Calu3 (cell line): ENCODE measurements at regions of chr18 and their contacts with region 1.

Region 1: DNA sequence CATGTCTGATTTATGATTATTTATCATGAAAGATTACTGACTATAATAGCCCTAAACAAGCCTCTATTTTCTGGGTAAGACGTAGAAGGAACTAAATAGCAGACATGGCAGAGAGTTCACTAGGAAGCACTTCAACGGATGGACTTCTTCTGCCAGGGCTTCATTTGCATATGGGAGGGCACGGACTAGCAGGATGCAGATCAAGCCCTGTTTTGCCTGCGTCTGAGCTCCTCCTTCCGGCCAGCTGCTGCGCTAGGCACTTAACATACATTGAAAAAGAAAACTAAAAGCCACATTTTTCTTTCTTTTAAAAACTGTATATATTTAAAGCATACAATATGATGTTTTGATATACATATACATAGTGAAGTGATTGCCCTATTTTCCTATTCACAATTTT is 340.0 kb upstream of the MEX3C start:
- DNase-seq: peak; percentile 68
- H3K4me3 Mint-ChIP-seq: no peak overlapping the region
- H3K27ac Mint-ChIP-seq: no peak overlapping the region
- H3K4me1 Mint-ChIP-seq: no peaks in the 10 kb centered on the region
- H3K27me3 Mint-ChIP-seq: no peaks in the 10 kb centered on the region
- CTCF ChIP-seq: peak; percentile 33

Region 2: DNA sequence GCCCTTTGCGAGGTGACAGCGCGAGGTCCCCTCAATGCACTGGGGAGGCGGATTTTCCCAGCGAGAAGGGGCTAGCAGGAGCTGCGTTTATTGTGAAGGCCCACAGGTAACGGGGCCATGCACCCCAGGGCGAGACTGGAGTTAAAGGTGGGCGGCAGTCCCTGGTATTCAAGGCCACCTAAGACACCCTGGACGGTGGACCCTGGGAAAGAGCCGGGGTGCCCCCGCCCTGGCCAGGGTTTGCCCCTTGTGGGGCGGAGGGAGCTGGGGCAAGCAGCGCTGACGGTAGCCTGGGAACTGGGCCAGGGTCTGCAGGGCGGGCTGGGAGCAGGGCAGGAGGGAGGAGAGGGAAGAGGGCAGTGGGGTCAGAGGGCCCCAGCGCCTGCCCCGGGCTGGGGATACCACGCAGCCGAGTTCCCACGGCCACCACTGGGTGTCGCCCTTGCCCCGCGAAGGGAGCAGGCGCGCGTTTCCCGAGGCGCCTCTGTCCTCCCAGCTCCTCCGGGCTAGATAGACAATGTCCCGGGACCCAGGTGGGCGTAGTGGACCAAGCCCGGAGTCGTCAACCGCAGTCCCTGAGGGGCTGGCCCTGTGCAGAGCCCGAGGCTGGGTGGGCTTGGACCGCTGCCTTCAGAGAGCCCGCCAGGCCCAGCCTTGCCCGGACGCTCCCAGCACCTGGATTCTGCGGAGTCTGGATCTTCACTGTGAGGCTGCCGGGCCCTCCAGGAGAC is 427.2 kb before region 1 on chr18:
- CTCF ChIA-PET with region 1: no interaction called
- intact Hi-C with region 1: loop called (anchors 1 kb)
- DNase-seq: peak; percentile 85
- H3K4me3 Mint-ChIP-seq: no peak overlapping the region
- H3K27ac Mint-ChIP-seq: no peak overlapping the region
- H3K4me1 Mint-ChIP-seq: peaks cover 16% of the 10 kb centered on the region
- H3K27me3 Mint-ChIP-seq: no peaks in the 10 kb centered on the region
- CTCF ChIP-seq: peak; percentile 98

Region 3: GRCh38 chr18:51197661-51198424 is 339.6 kb before region 1 on chr18 and contains the start of gene MEX3C:
- CTCF ChIA-PET with region 1: no interaction called
- intact Hi-C with region 1: loop called (anchors 5 kb)
- DNase-seq: peak; percentile 99
- H3K4me3 Mint-ChIP-seq: peak within 1 kb of the TSS; percentile 80
- H3K27ac Mint-ChIP-seq: peak within 1 kb of the TSS; percentile 100
- H3K4me1 Mint-ChIP-seq: peaks cover 9% of the 10 kb centered on the region
- H3K27me3 Mint-ChIP-seq: no peaks in the 10 kb centered on the region
- CTCF ChIP-seq: peak; percentile 25
- total RNA-seq, gene MEX3C: 71.5 and 86.9 TPM in 2 replicates

Region 4: GRCh38 chr18:51278045-51278649 is 259.3 kb before region 1 on chr18:
- CTCF ChIA-PET with region 1: no interaction called
- intact Hi-C with region 1: loop called (anchors 1 kb)
- DNase-seq: peak; percentile 66
- H3K4me3 Mint-ChIP-seq: no peak overlapping the region
- H3K27ac Mint-ChIP-seq: no peak overlapping the region
- H3K4me1 Mint-ChIP-seq: peaks cover 16% of the 10 kb centered on the region
- H3K27me3 Mint-ChIP-seq: no peaks in the 10 kb centered on the region
- CTCF ChIP-seq: peak; percentile 77

Region 5: DNA sequence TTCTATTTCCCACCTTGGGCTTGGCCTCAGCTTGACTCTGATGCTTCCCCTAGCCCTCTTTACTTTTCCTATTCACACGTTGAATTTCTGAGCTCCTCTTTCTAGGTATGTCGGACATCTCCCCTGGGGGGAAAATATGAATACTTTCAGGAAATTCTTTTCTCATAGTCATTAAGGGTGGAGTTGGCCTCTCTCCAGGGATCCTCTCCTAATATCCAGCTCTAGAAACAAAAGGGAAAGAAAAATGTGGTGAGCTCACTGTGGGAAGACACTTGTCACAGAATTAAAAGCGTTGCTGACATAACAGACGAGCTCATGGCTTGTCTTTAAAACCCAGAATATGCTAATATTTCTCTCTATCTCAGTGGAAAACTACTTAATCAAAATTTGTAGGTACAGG is 207.3 kb before region 1 on chr18:
- CTCF ChIA-PET with region 1: no interaction called
- intact Hi-C with region 1: no loop called
- DNase-seq: no peak
- H3K4me3 Mint-ChIP-seq: no peak overlapping the region
- H3K27ac Mint-ChIP-seq: no peak overlapping the region
- H3K4me1 Mint-ChIP-seq: no peaks in the 10 kb centered on the region
- H3K27me3 Mint-ChIP-seq: peaks cover 11% of the 10 kb centered on the region
- CTCF ChIP-seq: no peak

Region 6: GRCh38 chr18:51430538-51430937 is 106.9 kb before region 1 on chr18:
- CTCF ChIA-PET with region 1: no interaction called
- intact Hi-C with region 1: loop called (anchors 5 kb)
- DNase-seq: no peak
- H3K4me3 Mint-ChIP-seq: no peak overlapping the region
- H3K27ac Mint-ChIP-seq: no peak overlapping the region
- H3K4me1 Mint-ChIP-seq: peaks cover 44% of the 10 kb centered on the region
- H3K27me3 Mint-ChIP-seq: no peaks in the 10 kb centered on the region
- CTCF ChIP-seq: no peak

Region 7: GRCh38 chr18:51480407-51481261 is 56.9 kb before region 1 on chr18:
- CTCF ChIA-PET with region 1: no interaction called
- intact Hi-C with region 1: no loop called
- DNase-seq: no peak
- H3K4me3 Mint-ChIP-seq: no peak overlapping the region
- H3K27ac Mint-ChIP-seq: no peak overlapping the region
- H3K4me1 Mint-ChIP-seq: no peaks in the 10 kb centered on the region
- H3K27me3 Mint-ChIP-seq: peaks cover 21% of the 10 kb centered on the region
- CTCF ChIP-seq: no peak

Region 8: GRCh38 chr18:51621113-51621863 is 83.8 kb after region 1 on chr18:
- CTCF ChIA-PET with region 1: no interaction called
- intact Hi-C with region 1: no loop called
- DNase-seq: peak; percentile 66
- H3K4me3 Mint-ChIP-seq: no peak overlapping the region
- H3K27ac Mint-ChIP-seq: no peak overlapping the region
- H3K4me1 Mint-ChIP-seq: no peaks in the 10 kb centered on the region
- H3K27me3 Mint-ChIP-seq: peaks cover 77% of the 10 kb centered on the region
- CTCF ChIP-seq: peak; percentile 82

Region 9: GRCh38 chr18:51778115-51778514 is 240.6 kb after region 1 on chr18:
- CTCF ChIA-PET with region 1: no interaction called
- intact Hi-C with region 1: no loop called
- DNase-seq: no peak
- H3K4me3 Mint-ChIP-seq: no peak overlapping the region
- H3K27ac Mint-ChIP-seq: no peak overlapping the region
- H3K4me1 Mint-ChIP-seq: no peaks in the 10 kb centered on the region
- H3K27me3 Mint-ChIP-seq: peaks cover 28% of the 10 kb centered on the region
- CTCF ChIP-seq: no peak